SK-N-SH (cell line): ENCODE measurements at regions of chr1 and their contacts with region 1.

Region 1: GRCh38 chr1:202315576-202316168 is 26.1 kb downstream of the UBE2T start:
- DNase-seq: peak; percentile 86
- H3K4me3 ChIP-seq: peak overlapping the region in 1 of 2 experiments; percentile 20; a peak in 1 of 4 replicates
- H3K27ac ChIP-seq: no peak overlapping the region
- H3K4me1 ChIP-seq: peaks cover 9 to 10% of the 10 kb centered on the region in 2 experiments; a peak in 2 of 4 replicates
- H3K27me3 ChIP-seq: no peaks in the 10 kb centered on the region
- CTCF ChIP-seq: peak; percentile 99
- EP300 ChIP-seq: no peak
- RAD21 ChIP-seq: peak; percentile 99

Region 2: GRCh38 chr1:202154766-202155477 is 160.8 kb before region 1 on chr1:
- CTCF ChIA-PET with region 1: interaction called, 10 read pairs
- POLR2A ChIA-PET with region 1: no interaction called
- DNase-seq: peak; percentile 62
- H3K4me3 ChIP-seq: no peak overlapping the region
- H3K27ac ChIP-seq: peak overlapping the region in 1 of 2 experiments; percentile 77; a peak in 2 of 4 replicates
- H3K4me1 ChIP-seq: peaks cover 9 to 25% of the 10 kb centered on the region in 2 experiments; a peak in 1 of 4 replicates
- H3K27me3 ChIP-seq: no peaks in the 10 kb centered on the region
- CTCF ChIP-seq: peak; percentile 56
- EP300 ChIP-seq: no peak
- RAD21 ChIP-seq: peak; percentile 57

Region 3: DNA sequence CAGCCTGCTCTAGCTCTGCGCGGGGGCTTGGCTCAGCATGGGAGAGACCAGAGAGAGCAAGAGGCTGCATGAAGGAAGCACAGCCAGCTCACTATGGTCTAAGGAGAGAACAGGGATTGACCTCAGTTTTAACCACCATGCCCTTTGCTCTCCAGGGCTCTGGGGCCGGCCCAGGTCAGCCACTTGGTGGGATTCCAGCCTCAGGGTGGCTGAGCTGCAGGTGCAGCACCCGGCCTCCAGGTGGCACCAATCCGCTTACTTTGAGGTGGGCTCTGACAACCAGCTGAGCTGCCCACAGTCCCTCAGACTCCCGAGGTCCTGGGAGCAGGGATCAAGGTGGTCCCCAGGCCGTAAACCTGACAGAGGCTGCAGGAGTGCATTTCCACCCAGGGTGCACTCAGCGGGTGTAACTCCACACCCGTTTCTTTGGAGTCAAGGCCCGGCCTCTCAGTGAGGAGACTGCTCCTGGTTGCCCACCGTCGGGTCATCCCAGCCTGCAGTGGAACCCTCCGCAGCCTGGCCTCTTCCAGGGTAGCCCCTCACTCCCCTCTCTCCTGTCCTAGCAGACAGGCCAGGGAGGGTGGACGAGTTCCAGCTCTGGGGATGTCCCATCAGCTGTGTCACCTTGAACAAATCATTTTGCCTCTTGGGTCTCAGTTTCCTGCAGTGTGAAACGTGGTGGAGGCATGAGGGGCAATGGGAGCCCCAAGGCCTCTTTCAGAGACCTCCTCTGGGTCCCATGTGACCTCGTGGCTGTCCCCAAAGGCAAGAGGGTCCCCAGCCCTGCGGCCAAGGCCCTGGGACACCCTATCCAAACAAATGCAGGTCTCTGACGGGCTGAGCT is 122.7 kb before region 1 on chr1:
- CTCF ChIA-PET with region 1: interaction called, 187 read pairs
- POLR2A ChIA-PET with region 1: no interaction called
- DNase-seq: peak; percentile 89
- H3K4me3 ChIP-seq: no peak overlapping the region
- H3K27ac ChIP-seq: no peak overlapping the region
- H3K4me1 ChIP-seq: peaks cover 0 to 10% of the 10 kb centered on the region in 2 experiments; a peak in 1 of 4 replicates
- H3K27me3 ChIP-seq: peaks cover 28% of the 10 kb centered on the region
- CTCF ChIP-seq: peak; percentile 83
- EP300 ChIP-seq: no peak
- RAD21 ChIP-seq: peak; percentile 84

Region 4: GRCh38 chr1:202207292-202207691 is 108.4 kb before region 1 on chr1:
- CTCF ChIA-PET with region 1: interaction called, 59 read pairs
- POLR2A ChIA-PET with region 1: no interaction called
- DNase-seq: peak; percentile 89
- H3K4me3 ChIP-seq: no peak overlapping the region
- H3K27ac ChIP-seq: no peak overlapping the region
- H3K4me1 ChIP-seq: peaks cover 0 to 2% of the 10 kb centered on the region in 2 experiments; a peak in 1 of 4 replicates
- H3K27me3 ChIP-seq: peaks cover 6% of the 10 kb centered on the region; the same call in 1 of the 2 replicates
- CTCF ChIP-seq: peak; percentile 55
- EP300 ChIP-seq: no peak
- RAD21 ChIP-seq: peak; percentile 48

Region 5: DNA sequence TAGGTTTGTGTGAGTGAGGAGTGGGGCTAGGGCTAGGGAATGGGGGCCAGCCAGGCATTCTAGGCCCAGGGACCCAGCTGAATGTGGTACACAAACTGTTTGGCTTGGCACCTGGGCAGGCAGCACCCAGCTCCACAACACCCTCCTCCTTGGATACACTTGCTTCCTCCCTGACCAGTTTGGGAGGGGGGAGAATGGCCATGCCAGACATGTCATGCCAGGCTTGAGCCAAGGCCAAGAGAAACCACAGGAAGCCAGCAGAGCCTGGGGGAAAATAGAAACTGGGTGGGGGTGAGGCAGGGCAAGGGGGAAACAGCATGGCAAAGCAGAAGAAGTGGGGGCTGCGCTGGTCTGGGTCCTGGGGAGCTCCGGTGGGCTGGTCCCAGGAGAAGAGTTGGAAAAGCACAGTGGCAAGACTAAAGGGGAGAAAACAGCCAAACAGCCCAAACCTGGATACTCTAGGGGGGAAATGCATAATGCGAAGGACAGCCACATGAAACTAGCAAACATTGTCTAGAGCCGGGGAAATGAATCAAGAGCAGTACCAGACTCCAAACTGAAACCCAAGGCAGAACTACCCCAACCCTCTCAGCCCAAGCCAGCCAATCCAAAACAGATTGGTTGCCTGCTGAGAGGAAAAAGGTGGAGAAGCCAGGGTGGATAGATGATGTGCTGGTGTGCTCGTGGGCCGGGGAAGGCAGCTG is 74.1 kb before region 1 on chr1:
- CTCF ChIA-PET with region 1: interaction called, 10 read pairs
- POLR2A ChIA-PET with region 1: no interaction called
- DNase-seq: peak; percentile 47
- H3K4me3 ChIP-seq: no peak overlapping the region
- H3K27ac ChIP-seq: no peak overlapping the region
- H3K4me1 ChIP-seq: peaks cover 11 to 17% of the 10 kb centered on the region in 2 experiments; a peak in 3 of 4 replicates
- H3K27me3 ChIP-seq: no peaks in the 10 kb centered on the region
- CTCF ChIP-seq: no peak
- EP300 ChIP-seq: no peak
- RAD21 ChIP-seq: no peak

Region 6: DNA sequence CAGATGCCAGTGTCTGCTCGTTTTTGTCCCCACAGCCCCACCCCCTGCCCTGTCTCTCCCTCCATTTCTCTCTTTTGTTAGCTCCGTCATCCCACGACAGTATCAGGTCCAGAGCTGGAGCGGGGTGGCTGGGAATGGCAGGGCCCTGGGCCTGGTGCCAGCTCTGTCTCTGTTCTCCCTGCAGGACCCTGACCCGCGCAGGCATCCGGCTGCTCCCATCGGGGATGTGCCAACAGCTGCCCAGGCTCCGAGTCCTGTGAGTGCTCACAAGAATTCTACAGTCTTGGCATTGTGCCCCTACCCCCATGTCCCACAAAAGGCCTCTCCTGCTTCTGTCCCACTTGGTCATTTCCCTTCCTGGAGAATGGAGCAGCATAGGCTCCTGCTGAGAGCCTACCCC is 11.3 kb before region 1 on chr1:
- CTCF ChIA-PET with region 1: interaction called, 73 read pairs
- POLR2A ChIA-PET with region 1: no interaction called
- DNase-seq: peak; percentile 84
- H3K4me3 ChIP-seq: no peak overlapping the region
- H3K27ac ChIP-seq: peak overlapping the region in 1 of 2 experiments; percentile 58; a peak in 1 of 4 replicates
- H3K4me1 ChIP-seq: peaks cover 0 to 37% of the 10 kb centered on the region in 2 experiments; a peak in 1 of 4 replicates
- H3K27me3 ChIP-seq: no peaks in the 10 kb centered on the region
- CTCF ChIP-seq: no peak
- EP300 ChIP-seq: peak in 1 of 2 experiments; percentile 13; a peak in 1 of 4 replicates
- RAD21 ChIP-seq: no peak

Region 7: DNA sequence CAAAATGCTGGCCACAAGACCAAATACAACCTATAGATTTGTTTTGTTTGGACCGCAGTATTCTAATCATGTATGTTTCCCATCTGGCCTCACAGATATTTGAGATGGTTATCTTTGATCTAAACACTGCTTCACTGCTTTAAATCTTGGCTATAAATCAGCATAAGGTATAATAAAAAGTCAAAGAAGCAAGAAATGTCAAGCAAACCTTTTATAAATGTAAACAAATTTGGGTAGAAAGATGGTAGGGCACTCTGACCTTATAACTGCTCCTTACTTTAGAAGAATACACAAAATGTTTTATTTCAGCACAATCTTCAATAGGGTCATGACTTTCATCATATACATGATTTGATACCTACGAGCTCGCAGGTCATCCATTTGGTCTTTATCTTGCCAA is 19.6 kb after region 1 on chr1:
- CTCF ChIA-PET with region 1: interaction called, 16 read pairs
- POLR2A ChIA-PET with region 1: no interaction called
- DNase-seq: no peak
- H3K4me3 ChIP-seq: no peak overlapping the region
- H3K27ac ChIP-seq: no peak overlapping the region
- H3K4me1 ChIP-seq: peaks cover 0 to 3% of the 10 kb centered on the region in 2 experiments; a peak in 2 of 4 replicates
- H3K27me3 ChIP-seq: no peaks in the 10 kb centered on the region
- CTCF ChIP-seq: no peak
- EP300 ChIP-seq: no peak
- RAD21 ChIP-seq: no peak

Region 8: DNA sequence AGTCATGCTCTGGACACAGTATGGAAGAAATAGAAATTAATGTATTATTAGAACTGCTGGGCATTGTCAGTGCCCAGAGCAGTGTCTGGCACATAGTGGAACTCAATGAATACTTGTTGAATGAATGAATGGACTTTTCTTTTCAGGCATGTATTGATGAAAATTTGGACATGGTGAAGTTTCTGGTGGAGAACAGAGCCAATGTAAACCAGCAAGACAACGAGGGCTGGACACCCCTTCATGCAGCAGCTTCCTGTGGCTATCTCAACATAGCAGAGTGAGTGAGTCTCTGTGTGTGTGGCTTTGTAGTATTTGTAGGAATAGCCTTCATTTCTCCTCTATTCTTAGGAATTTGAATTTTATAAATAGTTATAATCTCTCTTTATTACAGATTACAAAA is 101.0 kb after region 1 on chr1:
- CTCF ChIA-PET with region 1: no interaction called
- POLR2A ChIA-PET with region 1: no interaction called
- DNase-seq: no peak
- H3K4me3 ChIP-seq: no peak overlapping the region
- H3K27ac ChIP-seq: peak overlapping the region in 1 of 2 experiments; percentile 16; a peak in 1 of 4 replicates
- H3K4me1 ChIP-seq: peaks cover 8 to 9% of the 10 kb centered on the region in 2 experiments; a peak in 3 of 4 replicates
- H3K27me3 ChIP-seq: no peaks in the 10 kb centered on the region
- CTCF ChIP-seq: no peak
- EP300 ChIP-seq: no peak
- RAD21 ChIP-seq: no peak